ENCODE measurements at regions of chr12 and their contacts with region 1.

Region 1: DNA sequence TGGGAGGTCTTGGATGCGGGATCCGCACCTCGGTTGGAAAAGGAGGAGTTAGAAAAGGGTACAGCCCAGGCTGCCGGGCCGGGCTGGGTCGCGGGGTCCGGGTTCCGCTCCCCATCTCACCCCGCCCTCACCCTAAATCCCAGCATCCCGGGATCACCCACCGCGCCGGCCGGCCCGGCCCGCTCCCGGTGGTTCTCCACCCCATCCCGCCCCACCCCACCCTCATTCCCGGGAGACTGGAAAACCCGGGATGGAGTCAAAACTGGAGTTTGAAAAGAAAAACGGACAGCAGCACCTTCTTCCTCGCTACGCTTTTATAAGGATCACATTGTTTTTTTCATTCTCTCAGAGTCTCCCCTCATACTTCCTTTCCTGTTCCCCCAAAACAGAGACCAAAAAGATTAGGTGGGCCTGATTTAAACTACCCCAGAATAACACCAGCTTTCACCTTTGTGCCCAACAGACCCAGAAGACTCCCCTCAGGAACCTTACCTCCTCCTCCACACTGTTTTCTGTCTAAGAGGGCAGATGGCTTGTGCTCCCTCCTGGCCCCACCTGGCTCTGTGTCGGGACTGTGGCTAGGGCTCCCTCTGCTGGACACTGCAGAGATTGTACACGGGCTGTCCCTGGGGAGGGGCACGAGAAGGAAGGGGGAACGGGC is 2.8 kb downstream of the GLI1 start:
- DNase-seq: peak; percentile 94
- ATAC-seq: peak; percentile 78
- H3K4me3 Mint-ChIP-seq: peak overlapping the region; percentile 83
- H3K27ac Mint-ChIP-seq: peak overlapping the region; percentile 88
- H3K4me1 Mint-ChIP-seq: peaks cover 40% of the 10 kb centered on the region
- H3K27me3 Mint-ChIP-seq: peaks cover 4% of the 10 kb centered on the region
- CTCF ChIP-seq: peak; percentile 89

Region 2: DNA sequence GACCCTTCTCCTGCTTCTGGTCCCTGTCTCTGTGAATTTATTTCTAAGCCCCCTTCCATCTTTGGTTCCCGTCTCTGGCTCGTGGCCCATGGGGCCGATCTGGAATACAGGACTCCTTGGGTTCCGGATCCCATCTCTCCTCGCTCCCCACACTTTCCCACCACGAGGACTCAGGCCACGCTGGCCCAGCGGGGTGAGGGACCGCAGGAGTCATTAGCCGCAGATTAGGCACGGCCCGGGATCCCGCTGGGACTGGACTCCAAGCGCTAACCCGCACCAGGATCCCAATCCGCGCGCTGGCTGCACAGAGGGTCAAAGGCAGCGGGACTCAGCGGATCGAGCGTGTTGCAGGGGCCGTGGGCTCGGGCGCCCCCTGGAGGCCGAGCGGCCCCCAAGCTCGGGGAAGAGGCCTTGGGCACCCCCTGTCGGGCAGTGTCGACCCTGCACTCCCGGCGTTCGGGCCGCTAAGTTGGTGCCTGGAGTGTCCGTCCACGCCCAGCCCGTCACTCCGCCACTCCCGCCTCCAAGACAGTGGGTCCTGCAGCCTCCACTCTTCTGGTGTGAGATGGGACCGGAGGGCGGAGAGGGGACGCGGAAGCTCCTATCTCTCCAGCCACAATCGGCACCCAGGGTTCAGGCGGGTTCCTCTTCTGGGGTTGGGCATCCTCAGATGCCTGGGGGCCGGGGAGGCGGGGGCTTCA is 223.4 kb before region 1 on chr12:
- CTCF ChIA-PET with region 1: interaction called, 45 read pairs
- POLR2A ChIA-PET with region 1: interaction called, 3 read pairs
- intact Hi-C with region 1: no loop called
- DNase-seq: peak; percentile 92
- ATAC-seq: peak; percentile 73
- H3K4me3 Mint-ChIP-seq: peak overlapping the region; percentile 83
- H3K27ac Mint-ChIP-seq: no peak overlapping the region
- H3K4me1 Mint-ChIP-seq: peaks cover 62% of the 10 kb centered on the region
- H3K27me3 Mint-ChIP-seq: peaks cover 39% of the 10 kb centered on the region
- CTCF ChIP-seq: peak; percentile 100

Region 3: GRCh38 chr12:57309420-57309819 is 153.0 kb before region 1 on chr12:
- CTCF ChIA-PET with region 1: interaction called, 27 read pairs
- POLR2A ChIA-PET with region 1: interaction called, 4 read pairs
- intact Hi-C with region 1: loop called (anchors 10 kb)
- DNase-seq: no peak
- ATAC-seq: no peak
- H3K4me3 Mint-ChIP-seq: no peak overlapping the region
- H3K27ac Mint-ChIP-seq: no peak overlapping the region
- H3K4me1 Mint-ChIP-seq: no peaks in the 10 kb centered on the region
- H3K27me3 Mint-ChIP-seq: no peaks in the 10 kb centered on the region
- CTCF ChIP-seq: no peak

Region 4: GRCh38 chr12:57441846-57442427 is 20.4 kb before region 1 on chr12:
- CTCF ChIA-PET with region 1: interaction called, 12 read pairs
- POLR2A ChIA-PET with region 1: interaction called, 3 read pairs
- intact Hi-C with region 1: no loop called
- DNase-seq: no peak
- ATAC-seq: no peak
- H3K4me3 Mint-ChIP-seq: no peak overlapping the region
- H3K27ac Mint-ChIP-seq: no peak overlapping the region
- H3K4me1 Mint-ChIP-seq: no peaks in the 10 kb centered on the region
- H3K27me3 Mint-ChIP-seq: peaks cover 3% of the 10 kb centered on the region
- CTCF ChIP-seq: no peak

Region 5: DNA sequence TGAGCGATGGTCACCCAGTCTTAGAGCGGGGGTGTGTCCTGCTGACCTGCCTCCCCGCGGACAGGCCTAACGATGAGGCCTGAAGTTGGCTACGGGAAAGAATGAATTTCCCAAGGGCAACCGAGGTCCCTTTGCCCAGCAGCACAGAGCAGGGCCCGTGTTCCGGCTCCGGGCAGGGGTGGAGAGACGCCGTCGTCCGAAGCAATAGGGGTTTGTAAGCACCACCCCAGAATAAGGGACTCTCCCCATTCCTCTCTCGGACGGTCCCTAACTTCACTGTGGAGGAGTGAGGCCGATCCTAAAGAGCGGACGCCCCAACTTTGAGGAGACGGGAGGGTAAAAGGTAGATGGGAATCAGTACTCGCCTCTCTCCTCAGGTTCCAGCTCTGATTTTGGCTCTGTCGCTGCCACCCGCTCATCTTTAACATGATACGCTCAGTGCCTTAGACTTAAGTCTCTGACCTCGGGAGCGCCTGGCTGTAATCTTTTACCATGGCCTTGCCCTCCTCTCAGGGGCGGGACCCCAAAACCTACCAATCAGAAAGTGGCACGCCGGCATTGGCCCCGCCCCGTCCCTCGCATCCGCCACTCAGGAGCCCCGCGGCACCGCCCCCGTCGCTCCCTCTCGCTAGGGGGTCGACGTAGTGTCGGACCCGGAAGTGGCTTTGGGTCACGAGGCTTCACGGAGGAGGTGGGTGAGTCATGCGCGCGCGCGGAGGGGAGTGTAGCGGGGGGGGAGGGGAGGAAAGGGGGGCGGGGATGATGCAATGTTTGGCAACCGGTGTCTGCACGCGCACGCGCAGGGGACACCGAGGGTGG is 57.9 kb after region 1 on chr12 and contains the start of gene DDIT3:
- CTCF ChIA-PET with region 1: interaction called, 14 read pairs
- POLR2A ChIA-PET with region 1: interaction called, 9 read pairs
- intact Hi-C with region 1: no loop called
- DNase-seq: peak; percentile 99
- ATAC-seq: peak; percentile 78
- H3K4me3 Mint-ChIP-seq: peak within 1 kb of the TSS; percentile 95
- H3K27ac Mint-ChIP-seq: peak within 1 kb of the TSS; percentile 99
- H3K4me1 Mint-ChIP-seq: peaks cover 66% of the 10 kb centered on the region
- H3K27me3 Mint-ChIP-seq: no peaks in the 10 kb centered on the region
- CTCF ChIP-seq: no peak
- total RNA-seq, gene DDIT3: 28.0 TPM

Region 6: GRCh38 chr12:57700317-57700716 is 237.9 kb after region 1 on chr12:
- CTCF ChIA-PET with region 1: no interaction called
- POLR2A ChIA-PET with region 1: no interaction called
- intact Hi-C with region 1: no loop called
- DNase-seq: no peak
- ATAC-seq: no peak
- H3K4me3 Mint-ChIP-seq: no peak overlapping the region
- H3K27ac Mint-ChIP-seq: no peak overlapping the region
- H3K4me1 Mint-ChIP-seq: no peaks in the 10 kb centered on the region
- H3K27me3 Mint-ChIP-seq: no peaks in the 10 kb centered on the region
- CTCF ChIP-seq: no peak